ENCODE measurements at regions of chr17 and their contacts with region 1.

Region 1: DNA sequence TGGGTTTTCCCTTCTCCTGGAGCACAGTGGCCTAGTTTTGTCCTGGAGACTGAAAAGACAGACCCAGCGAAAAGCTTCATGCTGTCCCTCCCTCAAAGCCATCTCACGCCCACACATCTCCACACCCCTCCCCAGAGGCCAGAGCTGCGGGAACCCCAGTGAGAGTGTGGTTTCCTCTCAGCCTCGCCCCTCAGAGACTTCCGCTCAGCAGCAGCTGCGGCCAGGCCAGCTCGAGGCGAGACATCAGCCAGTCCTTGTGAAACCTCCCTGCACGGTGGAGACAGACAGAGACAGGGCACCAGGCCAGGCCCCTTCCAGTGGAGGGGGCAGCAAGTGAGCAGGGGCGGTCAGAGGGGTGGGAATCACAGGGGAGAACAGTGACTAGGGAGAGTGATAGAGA is 77.0 kb upstream of the TNRC6C start:
- DNase-seq: peak; percentile 88
- ATAC-seq: peak; percentile 60
- H3K4me3 Mint-ChIP-seq: peak overlapping the region; percentile 45
- H3K27ac Mint-ChIP-seq: peak overlapping the region; percentile 86
- H3K4me1 Mint-ChIP-seq: peaks cover 76% of the 10 kb centered on the region
- H3K27me3 Mint-ChIP-seq: no peaks in the 10 kb centered on the region
- CTCF ChIP-seq: no peak

Region 2: DNA sequence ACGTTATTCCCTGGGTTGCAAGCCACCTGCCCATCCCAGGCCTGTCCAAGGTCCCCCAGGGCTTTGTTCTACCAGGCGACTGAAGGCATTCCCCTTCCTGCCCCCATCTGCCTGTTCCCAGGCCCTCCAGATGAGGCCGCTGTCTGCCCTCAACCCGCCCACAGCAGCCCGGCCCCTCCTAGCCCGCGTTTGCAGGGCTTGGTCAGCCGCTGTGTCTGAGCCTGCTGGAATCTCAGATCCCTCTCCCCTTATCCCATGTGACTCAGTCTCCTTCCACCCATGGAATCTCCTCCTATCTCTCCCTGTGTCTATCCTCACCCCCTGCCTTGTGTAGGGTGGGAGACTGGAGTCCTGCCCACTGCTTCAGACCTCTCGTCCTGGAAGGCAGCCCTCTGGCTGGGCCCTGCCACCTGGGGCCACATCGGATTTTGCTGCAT is 109.1 kb before region 1 on chr17:
- CTCF ChIA-PET with region 1: no interaction called
- POLR2A ChIA-PET with region 1: no interaction called
- intact Hi-C with region 1: loop called (anchors 10 kb)
- DNase-seq: peak; percentile 78
- ATAC-seq: peak; percentile 97
- H3K4me3 Mint-ChIP-seq: no peak overlapping the region
- H3K27ac Mint-ChIP-seq: no peak overlapping the region
- H3K4me1 Mint-ChIP-seq: peaks cover 12% of the 10 kb centered on the region
- H3K27me3 Mint-ChIP-seq: no peaks in the 10 kb centered on the region
- CTCF ChIP-seq: peak; percentile 76

Region 3: DNA sequence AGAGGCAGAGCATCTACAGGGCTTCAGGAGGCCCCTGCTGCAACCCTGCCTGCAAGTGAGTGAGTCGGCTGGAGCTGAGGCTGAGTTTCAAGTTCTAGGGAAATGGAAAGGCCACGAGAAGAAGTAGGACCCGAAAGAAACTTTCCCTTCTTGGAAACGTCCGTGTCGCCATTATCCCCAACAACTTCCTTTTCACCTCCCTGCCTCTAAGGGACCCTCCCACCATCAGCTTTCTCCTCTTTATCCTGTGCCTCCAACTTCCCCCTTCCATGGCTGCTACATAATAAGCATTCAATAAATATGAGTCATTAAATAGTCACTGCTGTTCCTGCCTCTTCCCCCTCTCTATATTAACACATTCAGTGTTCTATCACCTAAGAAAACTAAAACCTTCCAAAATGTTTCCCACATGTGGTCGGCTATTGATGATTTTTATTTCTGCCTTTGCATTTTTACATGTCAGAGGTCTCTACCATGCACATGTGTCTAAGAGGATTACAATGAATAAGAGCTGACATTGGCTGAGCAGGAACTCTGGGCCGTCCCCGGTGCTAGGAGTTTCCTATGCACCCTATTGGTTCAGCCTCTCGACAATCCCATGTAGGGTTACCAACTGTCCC is 38.9 kb before region 1 on chr17:
- CTCF ChIA-PET with region 1: no interaction called
- POLR2A ChIA-PET with region 1: interaction called, 6 read pairs
- intact Hi-C with region 1: loop called (anchors 5 kb)
- DNase-seq: peak; percentile 42
- ATAC-seq: peak; percentile 52
- H3K4me3 Mint-ChIP-seq: no peak overlapping the region
- H3K27ac Mint-ChIP-seq: peak overlapping the region; percentile 79
- H3K4me1 Mint-ChIP-seq: peaks cover 55% of the 10 kb centered on the region
- H3K27me3 Mint-ChIP-seq: no peaks in the 10 kb centered on the region
- CTCF ChIP-seq: no peak

Region 4: GRCh38 chr17:77999413-78000173 is 118.0 kb after region 1 on chr17:
- CTCF ChIA-PET with region 1: no interaction called
- POLR2A ChIA-PET with region 1: no interaction called
- intact Hi-C with region 1: loop called (anchors 10 kb)
- DNase-seq: peak; percentile 55
- ATAC-seq: peak; percentile 68
- H3K4me3 Mint-ChIP-seq: no peak overlapping the region
- H3K27ac Mint-ChIP-seq: no peak overlapping the region
- H3K4me1 Mint-ChIP-seq: peaks cover 69% of the 10 kb centered on the region
- H3K27me3 Mint-ChIP-seq: no peaks in the 10 kb centered on the region
- CTCF ChIP-seq: no peak

Measured in activated CD8-positive, alpha-beta T cell treated with anti-CD3 and anti-CD28 coated beads for 36 hours (primary cell).